ENCODE measurements at regions of chr12 and their contacts with region 1.

Region 1: DNA sequence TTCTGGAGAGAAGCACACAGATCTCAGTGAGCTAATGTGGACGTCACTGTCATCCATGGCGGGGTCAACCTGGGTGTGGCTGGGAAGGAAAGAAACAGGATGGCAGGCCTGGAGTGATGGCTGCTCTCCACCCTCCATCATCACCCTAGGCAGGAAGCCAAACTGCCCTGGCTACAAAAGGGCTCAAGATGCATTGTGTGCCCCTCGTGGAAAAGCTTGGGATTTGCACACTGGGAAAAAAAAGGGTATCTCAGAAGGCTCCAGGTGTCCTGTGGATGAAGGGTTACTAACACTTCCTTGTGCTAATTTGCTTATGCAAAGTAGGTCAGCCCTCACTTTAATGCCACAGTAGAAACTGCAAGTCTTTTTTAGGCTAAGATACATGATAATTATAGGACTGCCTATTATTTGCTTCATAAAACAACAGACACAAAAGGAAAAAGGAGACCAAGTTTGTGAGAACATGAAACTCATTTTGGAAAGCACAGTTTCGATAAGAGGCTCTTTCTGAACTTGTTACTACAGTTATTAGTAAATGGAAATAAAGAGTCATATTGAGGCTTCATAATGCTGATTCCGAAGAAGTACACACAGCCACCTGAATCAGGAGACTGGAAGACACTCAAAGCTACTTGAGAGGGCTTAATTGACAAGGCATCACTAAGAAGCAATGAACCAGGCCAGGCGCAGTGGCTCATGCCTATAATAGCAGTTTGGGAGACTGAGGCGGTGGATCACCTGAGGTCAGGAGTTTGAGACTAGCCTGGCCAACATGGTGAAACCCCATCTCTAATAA is 18.9 kb downstream of the RFC5 start:
- DNase-seq: peak; percentile 33
- H3K4me3 ChIP-seq: no peak overlapping the region
- H3K27ac ChIP-seq: no peak overlapping the region
- H3K4me1 ChIP-seq: no peaks in the 10 kb centered on the region
- H3K27me3 ChIP-seq: no peaks in the 10 kb centered on the region
- CTCF ChIP-seq: no peak

Region 2: GRCh38 chr12:117805865-117806264 is 229.6 kb before region 1 on chr12:
- CTCF ChIA-PET with region 1: no interaction called
- POLR2A ChIA-PET with region 1: no interaction called
- intact Hi-C with region 1: no loop called
- DNase-seq: no peak
- H3K4me3 ChIP-seq: no peak overlapping the region
- H3K27ac ChIP-seq: no peak overlapping the region
- H3K4me1 ChIP-seq: no peaks in the 10 kb centered on the region
- H3K27me3 ChIP-seq: peaks cover 44% of the 10 kb centered on the region
- CTCF ChIP-seq: no peak

Region 3: GRCh38 chr12:117874842-117875434 is 160.5 kb before region 1 on chr12:
- CTCF ChIA-PET with region 1: interaction called, 12 read pairs
- POLR2A ChIA-PET with region 1: no interaction called
- intact Hi-C with region 1: loop called (anchors 2 kb)
- DNase-seq: peak; percentile 73
- H3K4me3 ChIP-seq: no peak overlapping the region
- H3K27ac ChIP-seq: no peak overlapping the region
- H3K4me1 ChIP-seq: no peaks in the 10 kb centered on the region
- H3K27me3 ChIP-seq: peaks cover 24% of the 10 kb centered on the region
- CTCF ChIP-seq: peak; percentile 87

Region 4: DNA sequence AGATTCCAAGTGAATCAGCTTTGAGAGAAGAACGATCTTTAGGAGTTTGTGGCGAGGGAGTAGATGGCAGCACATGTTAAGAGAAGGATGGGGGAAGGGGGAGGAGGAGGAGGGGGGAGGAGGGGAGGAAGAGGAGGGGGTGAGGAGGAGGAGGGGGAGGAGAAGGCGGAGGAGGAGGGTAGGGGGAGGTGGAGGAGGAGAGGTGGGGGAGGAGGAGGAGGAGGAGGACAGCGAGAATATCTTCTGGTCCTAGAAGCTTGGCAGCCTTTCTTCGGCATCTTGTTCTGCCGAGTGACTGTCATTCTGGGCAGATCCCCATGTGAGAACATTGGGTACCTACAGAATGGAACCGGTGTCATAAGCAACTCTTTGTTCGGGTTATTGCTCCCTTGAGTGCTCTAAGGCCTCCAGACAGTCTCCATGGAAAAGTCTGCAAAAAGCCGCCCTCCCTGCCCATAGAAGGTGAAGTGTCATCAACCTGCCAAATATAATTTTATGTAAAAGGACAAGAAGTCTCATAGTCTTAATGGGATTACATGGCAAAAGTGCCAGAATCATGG is 12.1 kb before region 1 on chr12:
- CTCF ChIA-PET with region 1: no interaction called
- POLR2A ChIA-PET with region 1: interaction called, 15 read pairs
- intact Hi-C with region 1: no loop called
- DNase-seq: no peak
- H3K4me3 ChIP-seq: no peak overlapping the region
- H3K27ac ChIP-seq: no peak overlapping the region
- H3K4me1 ChIP-seq: no peaks in the 10 kb centered on the region
- H3K27me3 ChIP-seq: no peaks in the 10 kb centered on the region
- CTCF ChIP-seq: no peak

Region 5: GRCh38 chr12:118055144-118055557 is 19.7 kb after region 1 on chr12:
- CTCF ChIA-PET with region 1: no interaction called
- POLR2A ChIA-PET with region 1: no interaction called
- intact Hi-C with region 1: no loop called
- DNase-seq: peak; percentile 81
- H3K4me3 ChIP-seq: no peak overlapping the region
- H3K27ac ChIP-seq: no peak overlapping the region
- H3K4me1 ChIP-seq: peaks cover 7% of the 10 kb centered on the region
- H3K27me3 ChIP-seq: no peaks in the 10 kb centered on the region
- CTCF ChIP-seq: peak; percentile 75

Region 6: DNA sequence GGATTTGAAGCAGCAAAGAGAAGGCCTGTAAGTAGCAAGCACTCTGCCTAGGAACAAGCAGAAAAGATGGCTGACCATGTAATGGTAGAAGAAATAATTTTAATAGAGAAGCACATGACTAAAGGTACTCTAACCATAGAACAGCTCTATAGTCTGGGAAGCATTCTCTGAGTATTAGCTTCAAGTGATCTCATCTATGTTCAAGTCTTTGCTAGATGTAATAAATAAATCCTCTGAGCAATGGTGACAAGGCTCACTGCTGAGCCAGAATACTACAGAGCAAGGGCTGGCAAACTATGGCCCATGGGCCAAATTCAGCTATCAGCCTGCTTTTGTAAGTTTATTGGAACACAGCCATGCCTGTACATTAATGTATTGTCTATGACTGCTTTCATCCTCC is 185.3 kb after region 1 on chr12:
- CTCF ChIA-PET with region 1: no interaction called
- POLR2A ChIA-PET with region 1: interaction called, 10 read pairs
- intact Hi-C with region 1: no loop called
- DNase-seq: peak; percentile 12
- H3K4me3 ChIP-seq: no peak overlapping the region
- H3K27ac ChIP-seq: no peak overlapping the region
- H3K4me1 ChIP-seq: no peaks in the 10 kb centered on the region
- H3K27me3 ChIP-seq: no peaks in the 10 kb centered on the region
- CTCF ChIP-seq: no peak

Measured in A673 (cell line).